ENCODE measurements at regions of chr17 and their contacts with region 1.

Region 1: GRCh38 chr17:40287494-40288369 is at the start of gene CDC6:
- DNase-seq: peak; percentile 99 to 100
- ATAC-seq: peak; percentile 94 to 97
- H3K4me3 ChIP-seq: peak within 1 kb of the TSS; percentile 72
- H3K27ac ChIP-seq: peak within 1 kb of the TSS; percentile 70 to 83
- H3K4me1 ChIP-seq: peaks cover 34% of the 10 kb centered on the region
- CTCF ChIP-seq: no peak
- EP300 ChIP-seq: no peak; a peak in 1 of 5 replicates
- POLR2A ChIP-seq: peak; percentile 77
- RAD21 ChIP-seq: no peak
- polyA plus RNA-seq, gene CDC6: 71.4 and 79.5 TPM in 2 replicates

Region 2: GRCh38 chr17:40026816-40027613 is 260.7 kb before region 1 on chr17:
- CTCF ChIA-PET with region 1: interaction called, 11 read pairs
- POLR2A ChIA-PET with region 1: no interaction called
- DNase-seq: peak; percentile 83 to 93
- ATAC-seq: peak; percentile 84 to 97
- H3K4me3 ChIP-seq: no peak overlapping the region
- H3K27ac ChIP-seq: peak overlapping the region; percentile 30 to 56; a peak in 4 of 6 replicates
- H3K4me1 ChIP-seq: peaks cover 23% of the 10 kb centered on the region
- CTCF ChIP-seq: peak; percentile 96
- EP300 ChIP-seq: no peak
- POLR2A ChIP-seq: no peak
- RAD21 ChIP-seq: peak; percentile 77 to 79

Region 3: DNA sequence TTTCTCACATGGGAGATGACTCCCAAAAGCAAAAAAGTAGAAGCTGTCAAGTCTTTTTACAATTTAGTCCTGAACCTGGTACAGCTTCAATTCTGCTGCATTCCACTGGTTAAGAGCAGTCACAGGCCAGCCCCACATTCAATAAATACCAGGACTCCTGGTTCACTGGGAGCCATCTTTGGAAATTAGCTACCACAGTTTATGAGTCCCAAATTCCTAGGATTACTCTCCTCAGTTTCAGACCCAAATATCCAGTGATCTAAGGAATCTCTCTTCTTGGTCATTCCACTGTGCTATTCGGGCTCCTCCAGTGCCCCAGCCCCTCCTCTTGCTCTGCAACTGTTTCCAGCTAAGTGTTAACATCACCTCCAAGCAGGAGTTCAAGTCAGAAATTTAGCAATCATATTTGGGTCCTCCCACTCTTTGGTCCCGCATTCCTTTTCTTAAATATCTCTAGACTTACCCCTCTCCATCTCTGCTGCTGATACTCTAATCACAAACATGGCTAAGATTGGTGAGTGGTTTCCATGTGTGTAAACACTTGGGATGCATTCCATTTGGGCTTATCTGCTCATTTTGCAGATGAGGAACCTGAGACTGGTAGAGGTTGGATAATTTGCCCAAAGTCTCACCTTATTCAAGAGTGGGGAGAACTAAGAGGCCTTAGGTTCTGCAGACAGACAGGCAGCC is 78.2 kb before region 1 on chr17:
- CTCF ChIA-PET with region 1: interaction called, 232 read pairs
- POLR2A ChIA-PET with region 1: interaction called, 3 read pairs
- DNase-seq: no peak
- ATAC-seq: peak; percentile 36 to 54; a peak in 5 of 6 replicates
- H3K4me3 ChIP-seq: no peak overlapping the region
- H3K27ac ChIP-seq: no peak overlapping the region
- H3K4me1 ChIP-seq: no peaks in the 10 kb centered on the region
- CTCF ChIP-seq: no peak
- EP300 ChIP-seq: no peak
- POLR2A ChIP-seq: no peak
- RAD21 ChIP-seq: no peak

Region 4: GRCh38 chr17:40242774-40243173 is 45.0 kb before region 1 on chr17:
- CTCF ChIA-PET with region 1: interaction called, 24 read pairs
- POLR2A ChIA-PET with region 1: no interaction called
- DNase-seq: no peak
- ATAC-seq: no peak
- H3K4me3 ChIP-seq: no peak overlapping the region
- H3K27ac ChIP-seq: no peak overlapping the region
- H3K4me1 ChIP-seq: no peaks in the 10 kb centered on the region
- CTCF ChIP-seq: no peak
- EP300 ChIP-seq: no peak
- POLR2A ChIP-seq: no peak
- RAD21 ChIP-seq: no peak

Region 5: DNA sequence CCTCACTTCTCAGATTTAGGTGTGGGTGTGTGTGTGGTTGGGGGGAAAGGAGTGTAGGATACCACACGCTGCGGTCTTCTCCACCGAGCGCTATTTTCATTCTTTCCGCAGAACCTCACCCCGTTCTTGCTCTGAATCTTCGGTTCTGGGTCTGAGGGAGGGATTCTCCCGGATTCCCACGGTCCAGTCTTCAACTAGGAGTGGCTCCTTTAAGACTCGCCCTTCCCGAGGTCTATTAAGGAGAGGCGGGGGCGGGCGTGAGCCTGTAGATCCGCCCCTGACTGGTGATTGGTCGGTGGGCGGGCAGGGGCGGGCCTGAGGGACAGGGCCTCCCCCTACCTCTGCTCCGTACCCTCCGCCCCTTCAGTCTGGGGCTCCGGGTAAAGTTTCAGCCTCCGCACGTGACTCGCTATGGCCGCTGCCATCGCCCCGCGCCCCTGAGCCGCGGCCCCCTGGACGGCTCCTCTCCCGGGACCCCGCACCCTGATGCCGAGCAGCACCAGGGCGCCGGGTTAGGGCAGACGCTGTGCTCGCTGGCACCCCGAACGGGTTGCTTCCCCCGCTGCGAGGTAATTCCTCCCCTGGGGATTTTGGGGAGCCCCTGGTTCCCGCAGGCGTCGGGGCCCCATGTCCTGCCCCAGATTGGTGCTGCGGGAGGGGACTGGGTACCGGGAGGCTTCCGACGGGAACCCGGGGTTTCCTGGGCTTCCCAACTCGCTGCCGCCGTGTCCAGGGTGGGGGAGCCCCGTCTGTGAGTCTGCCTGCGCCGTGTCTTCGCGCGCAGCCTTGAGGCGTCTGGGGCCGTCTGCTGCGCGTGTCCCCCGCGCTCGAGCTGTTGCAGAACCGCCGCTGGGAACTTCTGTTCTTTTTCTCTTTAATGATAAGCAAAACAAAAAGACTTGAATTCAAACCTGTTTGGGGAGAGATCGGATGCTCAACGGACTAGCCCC is 30.4 kb after region 1 on chr17:
- CTCF ChIA-PET with region 1: interaction called, 1,069 read pairs
- POLR2A ChIA-PET with region 1: interaction called, 4 read pairs
- DNase-seq: peak; percentile 98 to 99
- ATAC-seq: peak; percentile 69 to 87
- H3K4me3 ChIP-seq: peak overlapping the region; percentile 81
- H3K27ac ChIP-seq: peak overlapping the region; percentile 95 to 97
- H3K4me1 ChIP-seq: peaks cover 86% of the 10 kb centered on the region
- CTCF ChIP-seq: no peak
- EP300 ChIP-seq: no peak
- POLR2A ChIP-seq: peak; percentile 9
- RAD21 ChIP-seq: no peak

Measured in A549 (cell line).